ENCODE measurements at regions of chr17 and their contacts with region 1.

Region 1: GRCh38 chr17:29180034-29180787 is at the start of gene MYO18A:
- DNase-seq: peak; percentile 82 to 92
- ATAC-seq: peak; percentile 78 to 81
- H3K4me3 ChIP-seq: peak within 1 kb of the TSS; percentile 60
- H3K27ac ChIP-seq: peak within 1 kb of the TSS; percentile 81 to 95
- H3K4me1 ChIP-seq: peaks cover 38% of the 10 kb centered on the region
- CTCF ChIP-seq: peak; percentile 95
- EP300 ChIP-seq: 0 out of 5 replicates have a peak, but pooled peaks of 1 of the 2 experiments have one; percentile 5
- POLR2A ChIP-seq: peak; percentile 70
- RAD21 ChIP-seq: peak; percentile 45 to 75
- polyA plus RNA-seq, gene MYO18A: 12.3 and 26.3 TPM in 2 replicates

Region 2: GRCh38 chr17:29148790-29149430 is 31.3 kb before region 1 on chr17:
- CTCF ChIA-PET with region 1: interaction called, 263 read pairs
- POLR2A ChIA-PET with region 1: interaction called, 47 read pairs
- DNase-seq: peak; percentile 92 to 95
- ATAC-seq: peak; percentile 87 to 95
- H3K4me3 ChIP-seq: peak overlapping the region; percentile 44
- H3K27ac ChIP-seq: peak overlapping the region; percentile 82 to 94
- H3K4me1 ChIP-seq: peaks cover 63% of the 10 kb centered on the region
- CTCF ChIP-seq: peak; percentile 98
- EP300 ChIP-seq: no peak
- POLR2A ChIP-seq: peak; percentile 84
- RAD21 ChIP-seq: peak; percentile 96 to 100

Region 3: GRCh38 chr17:29155227-29155965 is 24.8 kb before region 1 on chr17:
- CTCF ChIA-PET with region 1: interaction called, 263 read pairs
- POLR2A ChIA-PET with region 1: interaction called, 13 read pairs
- DNase-seq: peak; percentile 85 to 90
- ATAC-seq: peak; percentile 75 to 86
- H3K4me3 ChIP-seq: no peak overlapping the region
- H3K27ac ChIP-seq: peak overlapping the region; percentile 81 to 94
- H3K4me1 ChIP-seq: peaks cover 95% of the 10 kb centered on the region
- CTCF ChIP-seq: no peak
- EP300 ChIP-seq: peak in 1 of 2 experiments; percentile 41; a peak in 1 of 5 replicates
- POLR2A ChIP-seq: peak; percentile 19; the same call in 1 of the 2 replicates
- RAD21 ChIP-seq: no peak

Region 4: DNA sequence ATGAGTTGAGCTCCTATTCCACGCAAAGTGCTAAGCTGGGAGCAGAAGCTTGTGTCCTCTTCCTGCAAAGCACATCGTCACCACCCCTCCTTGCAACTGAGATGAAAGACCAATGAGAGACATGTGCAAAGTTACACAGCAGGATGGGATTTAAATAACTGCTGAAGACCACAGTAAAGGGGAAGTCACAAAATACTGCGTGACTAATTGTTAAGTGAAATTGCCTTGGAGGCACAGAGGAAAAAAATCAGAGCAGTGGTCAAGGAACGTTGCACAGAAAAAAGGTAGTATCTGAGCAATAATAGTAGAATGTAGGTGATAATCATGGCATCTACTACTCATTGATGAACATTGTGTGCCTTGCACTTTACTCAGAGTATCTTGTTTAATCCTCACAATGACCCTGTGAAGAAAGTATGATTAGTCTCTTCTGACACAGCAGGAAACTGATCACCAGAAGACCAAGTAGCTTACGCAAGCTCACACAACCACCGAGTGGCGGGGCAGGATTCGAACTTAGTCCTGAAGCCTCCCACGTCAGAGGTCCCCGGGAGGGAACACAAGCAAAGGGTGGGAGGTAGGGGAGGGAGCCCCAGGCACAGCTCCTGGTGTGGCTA is 15.4 kb after region 1 on chr17:
- CTCF ChIA-PET with region 1: interaction called, 159 read pairs
- POLR2A ChIA-PET with region 1: interaction called, 8 read pairs
- DNase-seq: no peak
- ATAC-seq: no peak
- H3K4me3 ChIP-seq: no peak overlapping the region
- H3K27ac ChIP-seq: no peak overlapping the region
- H3K4me1 ChIP-seq: no peaks in the 10 kb centered on the region
- CTCF ChIP-seq: no peak
- EP300 ChIP-seq: no peak
- POLR2A ChIP-seq: no peak
- RAD21 ChIP-seq: no peak

Region 5: GRCh38 chr17:29212681-29213121 is 32.5 kb after region 1 on chr17:
- CTCF ChIA-PET with region 1: interaction called, 158 read pairs
- POLR2A ChIA-PET with region 1: interaction called, 3 read pairs
- DNase-seq: no peak
- ATAC-seq: no peak
- H3K4me3 ChIP-seq: no peak overlapping the region
- H3K27ac ChIP-seq: no peak overlapping the region
- H3K4me1 ChIP-seq: 0 out of 3 replicates have a peak, but pooled peaks cover 2% of the 10 kb centered on the region
- CTCF ChIP-seq: no peak
- EP300 ChIP-seq: no peak
- POLR2A ChIP-seq: no peak
- RAD21 ChIP-seq: no peak

Region 6: DNA sequence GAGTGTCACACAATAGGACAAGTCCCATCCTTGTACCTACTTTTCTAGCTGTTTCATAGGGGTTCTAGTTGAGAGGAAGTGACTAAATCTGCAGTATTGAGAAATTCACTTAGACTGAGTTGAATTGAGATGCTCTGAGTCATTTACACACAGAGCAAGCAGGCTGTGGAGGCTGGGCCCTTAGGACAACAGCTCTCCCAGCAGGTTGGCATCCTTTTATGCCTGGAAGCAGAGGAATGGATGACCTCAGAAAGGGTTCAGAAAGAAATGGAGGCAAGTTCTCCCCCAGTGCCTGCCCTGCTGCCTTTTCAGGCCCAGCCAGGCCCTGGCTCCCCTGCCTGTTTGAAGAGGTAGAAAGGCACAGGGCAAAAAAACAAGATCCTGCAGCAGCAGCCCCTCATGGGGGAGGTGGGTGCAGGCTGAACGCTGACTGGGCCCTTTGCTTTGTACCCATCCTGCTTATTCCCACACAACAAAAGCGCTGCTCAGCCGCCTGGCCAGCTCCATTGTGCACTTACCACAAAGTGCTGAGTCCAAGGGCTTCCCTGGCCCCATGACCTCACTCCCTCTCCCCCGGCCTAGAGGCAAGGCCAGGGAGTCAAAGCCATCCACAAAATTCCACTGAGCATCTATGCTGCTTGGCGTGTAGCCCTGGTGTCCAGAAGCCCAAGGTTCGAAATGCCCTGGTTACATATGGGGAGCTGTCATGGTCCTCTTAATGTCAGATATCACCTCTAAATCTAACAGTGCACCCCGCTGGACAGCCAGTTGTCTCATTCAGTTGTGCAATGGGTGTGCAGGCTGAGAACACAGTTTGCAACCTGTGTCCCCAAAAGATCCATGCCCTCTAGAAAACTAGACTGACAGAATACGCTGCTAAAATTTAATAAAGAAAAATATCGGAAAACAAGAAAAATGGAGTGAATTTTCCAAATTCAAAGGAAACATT is 61.1 kb after region 1 on chr17:
- CTCF ChIA-PET with region 1: interaction called, 10 read pairs
- POLR2A ChIA-PET with region 1: interaction called, 6 read pairs
- DNase-seq: peak; percentile 96 to 97
- ATAC-seq: peak; percentile 95 to 98
- H3K4me3 ChIP-seq: no peak overlapping the region
- H3K27ac ChIP-seq: peak overlapping the region; percentile 93
- H3K4me1 ChIP-seq: peaks cover 49% of the 10 kb centered on the region
- CTCF ChIP-seq: no peak
- EP300 ChIP-seq: peak in 1 of 2 experiments; percentile 71; a peak in 1 of 5 replicates
- POLR2A ChIP-seq: no peak
- RAD21 ChIP-seq: peak; percentile 27 to 45; a peak in 2 of 5 replicates

Region 7: DNA sequence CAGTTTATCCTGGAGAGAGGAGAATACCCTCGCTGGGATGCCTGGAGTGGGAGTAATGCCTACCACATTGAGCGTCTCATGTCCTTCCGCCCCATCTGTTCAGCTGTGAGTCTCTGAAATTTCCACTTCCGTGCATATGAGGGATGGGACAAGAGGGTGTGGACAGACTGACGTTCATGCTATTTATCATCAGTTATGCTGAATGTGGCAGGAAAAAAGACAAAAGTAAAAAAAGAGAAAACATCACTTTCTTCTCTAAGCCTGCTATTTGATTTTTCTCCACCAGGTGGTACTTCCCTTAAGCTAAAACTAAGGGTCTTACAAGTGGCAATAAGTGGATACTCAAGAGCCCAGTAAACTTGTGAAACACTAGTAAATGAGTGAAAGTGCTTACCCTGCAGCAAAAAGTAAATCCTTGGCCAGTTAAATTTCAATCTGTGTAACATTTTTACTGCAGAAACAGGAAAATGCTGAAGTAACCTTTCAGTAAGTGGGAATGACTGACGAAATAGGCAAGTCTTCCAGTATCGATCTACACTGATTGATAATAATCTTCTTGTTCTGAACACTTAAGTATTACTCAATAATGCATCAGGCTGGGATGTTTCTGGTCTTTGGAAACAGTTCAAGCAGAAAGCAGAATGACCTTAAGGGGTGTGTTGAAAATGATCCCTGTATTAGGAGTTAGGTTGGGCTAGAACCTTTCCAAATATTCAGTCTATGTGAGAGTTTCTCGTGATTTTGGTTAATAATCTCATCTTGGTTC is 72.1 kb after region 1 on chr17:
- CTCF ChIA-PET with region 1: interaction called, 12 read pairs
- POLR2A ChIA-PET with region 1: interaction called, 6 read pairs
- DNase-seq: peak; percentile 59 to 63
- ATAC-seq: peak; percentile 58 to 60; a peak in 5 of 6 replicates
- H3K4me3 ChIP-seq: no peak overlapping the region
- H3K27ac ChIP-seq: no peak overlapping the region; a peak in 1 of 6 replicates
- H3K4me1 ChIP-seq: peaks cover 34% of the 10 kb centered on the region
- CTCF ChIP-seq: peak; percentile 49
- EP300 ChIP-seq: no peak
- POLR2A ChIP-seq: no peak
- RAD21 ChIP-seq: peak; percentile 15 to 46; a peak in 2 of 5 replicates

Measured in A549 (cell line).